Spleen (tissue), 13 donors: ENCODE measurements at regions of chr5 and their contacts with region 1.

Region 1: GRCh38 chr5:139422307-139422893 is 16.9 kb downstream of the DNAJC18 start:
- DNase-seq: no peak
- H3K4me3 ChIP-seq: no peak overlapping the region
- H3K27ac ChIP-seq: no peak overlapping the region
- H3K4me1 ChIP-seq: peaks cover 0 to 25% (median 13%) of the 10 kb centered on the region in 6 donors
- H3K27me3 ChIP-seq: no peaks in the 10 kb centered on the region
- CTCF ChIP-seq: peak; percentile 73 to 90 (median 81)
- POLR2A ChIP-seq: no peak

Region 2: DNA sequence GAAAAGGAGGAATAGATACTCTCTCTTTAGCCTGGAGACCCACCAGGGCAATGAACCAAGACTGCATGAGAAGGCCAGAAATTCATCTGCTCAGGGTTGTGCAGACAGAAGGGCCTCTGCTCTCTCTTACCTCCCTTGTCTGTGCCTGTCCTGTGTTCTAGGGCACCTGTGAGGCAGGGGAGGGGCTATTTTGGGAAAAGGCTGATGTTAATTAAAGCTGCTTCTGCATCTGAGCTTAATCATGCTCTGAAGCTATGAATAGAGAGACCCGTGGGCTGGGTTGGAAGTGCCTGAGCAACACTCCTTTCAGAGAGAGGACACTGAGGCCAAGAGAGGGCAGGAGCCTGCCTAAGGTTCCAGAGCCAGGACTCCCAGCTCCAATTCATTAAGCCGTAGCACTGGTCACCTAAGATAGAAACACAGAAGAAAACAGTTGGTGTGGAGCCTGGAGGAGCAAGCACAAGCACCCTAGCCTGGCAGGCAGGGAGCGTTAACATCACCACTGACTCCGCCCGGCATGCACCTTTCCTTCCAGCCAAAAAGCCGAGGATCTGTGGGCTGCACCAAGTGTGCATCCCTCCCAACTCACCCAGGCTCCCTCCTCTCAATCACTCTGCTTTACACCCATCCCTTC is 91.6 kb after region 1 on chr5:
- intact Hi-C with region 1: loop called (anchors 5 kb)
- DNase-seq: peak; percentile 54
- H3K4me3 ChIP-seq: no peak overlapping the region
- H3K27ac ChIP-seq: no peak overlapping the region
- H3K4me1 ChIP-seq: peaks cover 0 to 47% (median 27%) of the 10 kb centered on the region in 6 donors
- H3K27me3 ChIP-seq: no peaks in the 10 kb centered on the region
- CTCF ChIP-seq: peak in 5 of 11 experiments; percentile 7 to 49 (median 26)
- POLR2A ChIP-seq: no peak

Region 3: GRCh38 chr5:139765409-139766217 is 343.2 kb after region 1 on chr5:
- intact Hi-C with region 1: loop called (anchors 5 kb)
- DNase-seq: peak; percentile 96
- H3K4me3 ChIP-seq: peak overlapping the region; percentile 44 to 81 (median 54)
- H3K27ac ChIP-seq: peak overlapping the region; percentile 29 to 81 (median 62)
- H3K4me1 ChIP-seq: peaks cover 0 to 60% (median 32%) of the 10 kb centered on the region in 6 donors
- H3K27me3 ChIP-seq: peaks cover 0 to 29% (median 11%) of the 10 kb centered on the region in 7 donors
- CTCF ChIP-seq: peak; percentile 89 to 99 (median 96)
- POLR2A ChIP-seq: no peak